WTC11 (cell line): ENCODE measurements at regions of chr6 and their contacts with region 1.

Region 1: GRCh38 chr6:166106076-166106686 is 61.5 kb downstream of the TBXT start:
- DNase-seq: peak; percentile 85
- ATAC-seq: peak; percentile 90
- H3K4me3 Mint-ChIP-seq: no peak overlapping the region
- H3K27ac Mint-ChIP-seq: no peak overlapping the region
- H3K4me1 Mint-ChIP-seq: no peaks in the 10 kb centered on the region
- H3K27me3 Mint-ChIP-seq: peaks cover 12% of the 10 kb centered on the region
- CTCF ChIP-seq: peak; percentile 88

Region 2: DNA sequence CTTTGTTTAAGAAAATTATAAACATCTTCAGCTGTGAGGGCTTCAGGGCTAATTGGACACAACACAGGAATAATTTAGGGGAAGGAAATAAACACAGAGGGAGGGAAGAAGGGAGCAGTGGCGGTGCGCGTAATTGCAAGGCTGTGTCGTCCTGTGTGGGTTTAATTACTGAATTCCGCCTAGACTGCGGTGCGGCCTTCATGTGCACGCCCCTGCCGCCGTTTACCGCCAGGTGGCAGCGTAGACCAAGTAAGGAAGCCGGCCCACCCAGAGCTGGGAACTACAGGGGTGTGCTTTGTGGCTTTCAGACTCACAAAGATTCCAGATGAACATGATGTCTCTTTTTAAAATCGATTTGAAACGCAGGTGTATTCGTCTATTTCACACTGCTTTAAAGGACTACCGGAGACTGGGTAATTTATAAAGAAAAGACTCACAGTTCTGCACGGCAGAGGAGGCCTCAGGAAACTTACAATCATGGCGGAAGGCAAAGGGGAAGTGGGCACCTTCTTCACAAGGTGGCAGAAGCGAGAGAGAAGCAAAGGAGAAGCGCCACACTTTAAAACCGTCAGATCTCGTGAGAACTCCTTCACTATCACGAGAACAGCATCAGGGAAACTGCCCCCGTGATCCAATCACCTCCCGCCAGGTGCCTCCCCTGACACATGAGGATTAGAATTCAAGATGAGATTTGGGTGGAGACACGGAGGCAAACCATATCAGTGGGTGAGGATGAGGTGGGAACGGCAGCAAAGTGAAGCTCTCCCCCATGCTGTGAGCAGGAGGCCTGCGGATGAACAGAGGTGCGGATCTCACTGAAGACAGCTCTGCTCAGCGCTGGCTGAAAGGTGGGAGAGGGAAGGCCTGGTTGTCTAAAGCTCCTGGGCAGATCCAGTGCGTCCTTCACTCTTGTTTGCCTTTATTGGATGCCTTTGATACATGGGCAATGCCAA is 221.1 kb before region 1 on chr6:
- CTCF ChIA-PET with region 1: interaction called, 18 read pairs
- POLR2A ChIA-PET with region 1: no interaction called
- DNase-seq: peak; percentile 90
- ATAC-seq: peak; percentile 98
- H3K4me3 Mint-ChIP-seq: peak overlapping the region; percentile 15; the same call in 1 of the 2 replicates
- H3K27ac Mint-ChIP-seq: no peak overlapping the region
- H3K4me1 Mint-ChIP-seq: peaks cover 6% of the 10 kb centered on the region
- H3K27me3 Mint-ChIP-seq: peaks cover 11% of the 10 kb centered on the region; the same call in 1 of the 2 replicates
- CTCF ChIP-seq: peak; percentile 80

Region 3: GRCh38 chr6:165931675-165932074 is 174.5 kb before region 1 on chr6:
- CTCF ChIA-PET with region 1: interaction called, 11 read pairs
- POLR2A ChIA-PET with region 1: no interaction called
- DNase-seq: peak; percentile 24
- ATAC-seq: peak; percentile 68
- H3K4me3 Mint-ChIP-seq: no peak overlapping the region
- H3K27ac Mint-ChIP-seq: no peak overlapping the region
- H3K4me1 Mint-ChIP-seq: peaks cover 2% of the 10 kb centered on the region
- H3K27me3 Mint-ChIP-seq: peaks cover 6% of the 10 kb centered on the region
- CTCF ChIP-seq: no peak

Region 4: DNA sequence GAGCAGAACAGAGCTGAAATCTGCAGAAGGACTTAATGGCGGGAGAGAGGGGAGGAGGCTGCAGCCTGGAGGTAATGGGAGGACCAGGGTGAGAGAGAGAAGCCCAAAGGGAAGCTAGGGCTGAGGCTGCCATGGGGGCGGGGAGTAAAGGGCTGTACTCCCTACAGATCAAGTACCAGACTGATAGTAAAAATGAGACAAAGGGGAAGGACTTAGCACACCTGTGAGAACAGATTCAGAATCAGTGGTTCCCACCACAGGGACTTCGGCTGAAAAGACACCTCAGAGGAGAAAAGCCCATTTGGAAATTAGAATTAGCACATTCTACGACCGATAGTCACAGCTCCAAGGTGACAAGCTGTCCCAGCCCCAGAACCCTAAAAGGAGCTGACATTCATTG is 67.8 kb after region 1 on chr6:
- CTCF ChIA-PET with region 1: no interaction called
- POLR2A ChIA-PET with region 1: no interaction called
- DNase-seq: no peak
- ATAC-seq: no peak
- H3K4me3 Mint-ChIP-seq: no peak overlapping the region
- H3K27ac Mint-ChIP-seq: no peak overlapping the region
- H3K4me1 Mint-ChIP-seq: peaks cover 16% of the 10 kb centered on the region
- H3K27me3 Mint-ChIP-seq: peaks cover 15% of the 10 kb centered on the region
- CTCF ChIP-seq: no peak